Dorsolateral prefrontal cortex (tissue), 120 donors: ENCODE measurements at regions of chr2 and their contacts with region 1.

Region 1: GRCh38 chr2:96407041-96407918 is 71.7 kb downstream of the NCAPH start:
- DNase-seq: peak; percentile 58 to 84 (median 72)
- H3K4me3 ChIP-seq: peak overlapping the region in 35 of 59 donors; percentile 0 to 50 (median 21)
- H3K27ac ChIP-seq: peak overlapping the region; percentile 68 to 96 (median 91)
- H3K27me3 ChIP-seq: no peaks in the 10 kb centered on the region
- CTCF ChIP-seq: peak; percentile 66 to 89 (median 79)

Region 2: GRCh38 chr2:96265840-96266679 is 141.2 kb before region 1 on chr2 and contains the starts of genes CIAO1 and TMEM127:
- intact Hi-C with region 1: loop called in 1 of 2 experiments (anchors 5 kb)
- DNase-seq: peak; percentile 96 to 100 (median 99)
- H3K4me3 ChIP-seq: peak within 1 kb of the TSS; percentile 75 to 100 (median 94)
- H3K27ac ChIP-seq: peak within 1 kb of the TSS in 58 of 59 donors; percentile 55 to 96 (median 87)
- H3K27me3 ChIP-seq: no peaks in the 10 kb centered on the region
- CTCF ChIP-seq: peak in 48 of 56 donors; percentile 1 to 68 (median 42)
- total RNA-seq, gene CIAO1: 71.3 to 116 (median 96.1) TPM
- total RNA-seq, gene TMEM127: 33.5 to 77.9 (median 59.2) TPM

Region 3: GRCh38 chr2:96329416-96330269 is 77.6 kb before region 1 on chr2:
- intact Hi-C with region 1: loop called in 1 of 2 experiments (anchors 10 kb)
- DNase-seq: no peak
- H3K4me3 ChIP-seq: no peak overlapping the region
- H3K27ac ChIP-seq: no peak overlapping the region
- H3K27me3 ChIP-seq: peaks cover 0 to 16% (median 0%) of the 10 kb centered on the region in 45 donors
- CTCF ChIP-seq: no peak

Region 4: DNA sequence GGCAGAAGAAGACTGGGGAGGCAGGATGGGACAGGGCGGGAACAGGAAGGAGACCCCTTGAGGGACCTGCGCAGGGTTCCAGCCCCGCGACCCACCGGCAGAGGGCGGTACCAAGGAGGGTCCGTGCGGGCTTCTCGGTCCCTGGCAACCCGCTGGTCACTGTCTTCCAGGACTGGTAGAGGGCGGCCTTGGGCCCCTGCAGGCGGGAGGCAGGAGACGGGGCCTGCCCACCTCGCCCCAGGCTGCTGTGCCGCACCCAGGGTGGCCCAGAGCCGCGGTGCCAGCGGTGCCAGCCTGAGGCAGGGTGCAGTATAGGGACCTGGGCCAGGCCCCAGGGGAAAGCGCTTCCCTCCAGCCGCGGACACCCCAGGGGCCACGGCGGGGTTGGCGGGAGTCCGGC is 63.4 kb after region 1 on chr2:
- intact Hi-C with region 1: loop called in 1 of 2 experiments (anchors 5 kb)
- DNase-seq: peak in 5 of 10 donors; percentile 10 to 66 (median 40)
- H3K4me3 ChIP-seq: peak overlapping the region in 45 of 59 donors; percentile 12 to 57 (median 36)
- H3K27ac ChIP-seq: peak overlapping the region in 53 of 59 donors; percentile 14 to 93 (median 71)
- H3K27me3 ChIP-seq: no peaks in the 10 kb centered on the region
- CTCF ChIP-seq: peak in 55 of 56 donors; percentile 32 to 77 (median 61)

Region 5: DNA sequence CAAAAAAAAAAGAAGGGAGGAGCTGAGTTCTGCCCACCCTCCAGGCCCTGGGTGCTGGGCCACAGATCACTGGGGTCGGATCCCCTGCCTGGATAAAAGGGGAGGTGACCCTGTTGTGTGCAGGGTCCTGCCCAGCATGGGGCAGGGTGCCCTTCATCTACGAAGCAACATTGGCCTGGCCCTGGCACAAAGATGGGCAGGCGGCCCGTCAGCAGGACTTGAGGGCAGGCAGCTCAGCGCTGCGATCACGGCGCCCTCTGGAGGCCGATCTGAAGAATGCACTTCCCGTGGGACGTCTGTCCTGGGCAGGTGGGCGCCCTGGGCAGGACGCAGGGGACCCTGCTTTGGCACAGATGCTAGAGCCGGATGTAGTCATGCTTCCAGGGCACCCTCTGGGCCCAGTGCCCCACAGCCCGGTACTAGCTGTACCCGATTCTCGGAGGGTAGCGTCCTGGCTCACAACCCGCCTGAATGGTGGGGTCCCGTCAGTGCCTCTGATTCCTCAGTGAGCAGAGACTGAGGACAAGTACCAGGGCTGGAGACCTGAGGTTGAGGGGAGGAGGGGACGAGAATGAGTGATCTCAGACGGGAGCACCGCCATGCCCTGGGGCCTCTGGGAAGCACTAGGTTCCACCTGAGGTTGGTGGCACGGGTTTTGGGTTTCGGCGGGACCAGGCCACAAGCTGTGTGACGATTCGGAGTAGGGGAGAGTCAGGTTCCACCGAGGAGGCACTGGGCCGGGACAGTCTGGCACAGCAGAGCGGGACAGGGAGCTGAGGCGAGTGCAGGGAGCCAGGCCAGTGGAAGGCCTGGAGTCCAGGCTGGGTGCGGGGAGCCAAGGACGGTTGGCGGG is 147.2 kb after region 1 on chr2:
- intact Hi-C with region 1: loop called in 1 of 2 experiments (anchors 5 kb)
- DNase-seq: peak; percentile 54 to 84 (median 70)
- H3K4me3 ChIP-seq: peak overlapping the region in 30 of 59 donors; percentile 3 to 50 (median 28)
- H3K27ac ChIP-seq: peak overlapping the region in 4 of 59 donors; percentile 6 to 47 (median 19)
- H3K27me3 ChIP-seq: no peaks in the 10 kb centered on the region
- CTCF ChIP-seq: peak; percentile 84 to 100 (median 97)

Region 6: GRCh38 chr2:97011977-97012565 is 604.8 kb after region 1 on chr2:
- intact Hi-C with region 1: no loop called
- DNase-seq: peak in 1 of 10 donors; percentile 16
- H3K4me3 ChIP-seq: no peak overlapping the region
- H3K27ac ChIP-seq: no peak overlapping the region
- H3K27me3 ChIP-seq: peaks cover 0 to 2% (median 0%) of the 10 kb centered on the region in 45 donors
- CTCF ChIP-seq: peak in 55 of 56 donors; percentile 28 to 73 (median 57)